Mammary epithelial cell (primary cell): ENCODE measurements at regions of chr20 and their contacts with region 1.

Region 1: DNA sequence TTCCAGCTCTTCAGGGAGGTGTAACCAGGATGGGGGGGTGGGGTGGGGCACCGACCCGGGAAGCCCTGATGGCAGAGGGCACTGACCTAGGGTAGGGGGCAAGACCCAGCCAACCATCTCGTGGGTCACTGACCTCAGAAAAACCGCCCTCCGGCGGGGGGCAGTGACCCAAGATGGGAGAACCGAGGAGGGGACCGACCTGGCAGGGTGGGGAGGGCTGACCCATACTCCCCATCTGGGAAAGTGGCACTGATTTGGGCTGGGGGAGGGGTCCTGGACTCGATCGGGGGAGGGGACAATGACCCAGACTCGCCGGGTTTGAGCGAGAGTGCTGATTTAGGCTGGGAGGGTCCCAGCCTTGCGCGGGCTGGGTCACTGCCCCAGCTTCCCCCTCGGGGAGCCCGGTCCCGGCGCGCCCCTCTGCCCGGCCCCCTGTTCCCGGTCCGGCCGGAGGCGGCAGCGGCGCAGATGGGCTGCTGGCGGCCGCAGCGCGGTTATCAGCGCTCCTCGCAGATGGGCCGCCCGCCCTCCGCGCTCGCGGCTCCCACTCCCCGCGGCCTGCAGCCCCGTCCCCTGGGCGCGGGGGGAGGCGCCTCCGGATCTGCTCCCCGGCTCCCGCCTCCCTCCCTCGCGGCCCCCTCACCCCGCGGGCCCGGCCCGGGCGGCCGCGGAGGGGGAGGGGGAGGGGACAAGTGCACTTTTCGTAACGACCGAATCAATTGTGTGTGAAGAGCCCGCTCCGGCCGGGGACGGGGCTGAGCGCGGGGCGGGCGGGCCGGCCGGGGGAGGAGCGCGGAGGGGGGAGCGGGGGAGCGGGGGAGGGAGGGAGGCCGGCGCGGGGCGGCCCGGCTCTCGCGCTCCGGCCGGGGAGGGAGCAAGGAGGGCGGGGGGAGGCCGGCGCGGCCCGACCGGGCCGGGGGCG is 2.2 kb downstream of the NOL4L start:
- DNase-seq: no peak
- H3K4me3 ChIP-seq: peak overlapping the region in 2 of 3 experiments; percentile 20 to 55
- H3K27ac ChIP-seq: no peak overlapping the region
- H3K4me1 ChIP-seq: peaks cover 3% of the 10 kb centered on the region
- H3K27me3 ChIP-seq: no peaks in the 10 kb centered on the region
- CTCF ChIP-seq: no peak

Region 2: GRCh38 chr20:32621071-32621890 is 38.4 kb after region 1 on chr20:
- CTCF ChIA-PET with region 1: no interaction called
- dilution Hi-C with region 1: loop called (anchors 5 kb)
- in situ Hi-C with region 1: no loop called
- intact Hi-C with region 1: no loop called
- DNase-seq: no peak
- H3K4me3 ChIP-seq: no peak overlapping the region
- H3K27ac ChIP-seq: no peak overlapping the region
- H3K4me1 ChIP-seq: no peaks in the 10 kb centered on the region
- H3K27me3 ChIP-seq: peaks cover 2% of the 10 kb centered on the region
- CTCF ChIP-seq: no peak